ENCODE measurements at regions of chr9 and their contacts with region 1.

Region 1: GRCh38 chr9:71001780-71002386 is 119.5 kb downstream of the TRPM3 start:
- DNase-seq: peak; percentile 4 to 15 (median 6)
- ATAC-seq: no peak
- H3K4me3 ChIP-seq: no peak overlapping the region
- H3K27ac ChIP-seq: no peak overlapping the region
- H3K4me1 ChIP-seq: no peaks in the 10 kb centered on the region
- H3K27me3 ChIP-seq: no peaks in the 10 kb centered on the region
- CTCF ChIP-seq: peak; percentile 28 to 46 (median 38); a peak in 4 of 6 replicates
- EP300 ChIP-seq: no peak
- POLR2A ChIP-seq: no peak
- RAD21 ChIP-seq: no peak

Region 2: DNA sequence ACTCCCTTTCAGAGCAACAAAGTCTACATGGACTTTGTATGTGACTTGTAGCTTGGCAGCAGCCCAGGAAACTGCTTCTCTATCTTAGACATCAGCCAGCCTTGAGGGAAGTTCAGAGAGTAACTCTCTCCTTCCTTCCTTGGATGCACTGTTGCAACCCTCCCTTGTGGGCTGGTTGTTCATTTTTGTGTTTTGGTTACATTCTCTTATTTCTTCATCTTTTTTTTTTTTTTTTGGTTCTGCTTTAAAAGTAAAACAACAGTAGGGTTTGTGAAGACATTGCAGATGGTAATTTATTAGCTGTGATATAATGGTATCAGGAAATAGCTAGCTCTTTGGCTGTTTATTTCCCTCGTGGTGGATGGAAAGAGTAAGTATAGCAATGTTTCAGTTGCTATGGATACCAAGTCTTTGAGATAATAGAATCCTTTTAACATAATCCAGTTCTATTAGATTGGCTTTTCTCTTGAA is 1056.2 kb before region 1 on chr9:
- CTCF ChIA-PET with region 1: no interaction called
- POLR2A ChIA-PET with region 1: no interaction called
- in situ Hi-C with region 1: no loop called
- intact Hi-C with region 1: no loop called
- DNase-seq: peak in 1 of 4 experiments; percentile 16
- ATAC-seq: no peak
- H3K4me3 ChIP-seq: no peak overlapping the region
- H3K27ac ChIP-seq: no peak overlapping the region; the same call in 2 of the 3 replicates
- H3K4me1 ChIP-seq: no peaks in the 10 kb centered on the region
- H3K27me3 ChIP-seq: no peaks in the 10 kb centered on the region
- CTCF ChIP-seq: no peak
- EP300 ChIP-seq: no peak
- POLR2A ChIP-seq: no peak
- RAD21 ChIP-seq: no peak

Region 3: GRCh38 chr9:70924895-70925547 is 76.9 kb before region 1 on chr9:
- CTCF ChIA-PET with region 1: interaction called, 4 read pairs
- POLR2A ChIA-PET with region 1: no interaction called
- in situ Hi-C with region 1: no loop called
- intact Hi-C with region 1: loop called (anchors 2 kb)
- DNase-seq: peak; percentile 7 to 37 (median 14)
- ATAC-seq: peak; percentile 79
- H3K4me3 ChIP-seq: no peak overlapping the region
- H3K27ac ChIP-seq: no peak overlapping the region
- H3K4me1 ChIP-seq: no peaks in the 10 kb centered on the region
- H3K27me3 ChIP-seq: no peaks in the 10 kb centered on the region
- CTCF ChIP-seq: peak; percentile 55 to 64 (median 57)
- EP300 ChIP-seq: no peak
- POLR2A ChIP-seq: no peak
- RAD21 ChIP-seq: peak; percentile 45 to 66